ENCODE measurements at regions of chr6 and their contacts with region 1.

Region 1: DNA sequence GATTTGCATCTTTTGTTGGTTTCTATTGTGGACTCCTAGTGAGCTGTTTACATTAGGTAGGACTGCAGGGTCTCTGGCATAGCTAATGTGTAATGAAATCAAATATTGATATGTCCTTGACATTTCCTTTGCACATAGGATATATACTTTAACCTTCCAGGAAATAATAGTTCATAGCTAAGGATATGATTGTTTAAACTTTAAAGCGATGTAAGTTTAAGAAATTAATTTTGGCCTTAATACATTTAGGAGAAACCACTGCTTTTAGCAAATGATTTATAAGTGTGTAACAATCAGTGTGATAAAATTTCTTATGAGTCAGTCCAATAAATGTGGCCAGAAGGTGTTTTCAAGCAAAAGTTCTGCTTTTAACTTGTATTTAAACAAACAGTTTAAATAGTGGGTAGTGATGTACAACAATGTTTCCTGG is 171.8 kb downstream of the HS3ST5 start:
- DNase-seq: no peak
- ATAC-seq: no peak
- H3K4me3 ChIP-seq: no peak overlapping the region
- H3K27ac ChIP-seq: no peak overlapping the region
- H3K4me1 ChIP-seq: no peaks in the 10 kb centered on the region
- H3K27me3 ChIP-seq: peaks cover 3% of the 10 kb centered on the region; the same call in 1 of the 2 replicates
- CTCF ChIP-seq: no peak
- POLR2A ChIP-seq: no peak
- RAD21 ChIP-seq: no peak

Region 2: GRCh38 chr6:114144887-114145851 is 25.8 kb before region 1 on chr6:
- CTCF ChIA-PET with region 1: interaction called, 3 read pairs
- POLR2A ChIA-PET with region 1: no interaction called
- dilution Hi-C with region 1: no loop called
- in situ Hi-C with region 1: no loop called
- intact Hi-C with region 1: loop called (anchors 1 kb)
- DNase-seq: no peak
- ATAC-seq: no peak
- H3K4me3 ChIP-seq: no peak overlapping the region
- H3K27ac ChIP-seq: no peak overlapping the region
- H3K4me1 ChIP-seq: no peaks in the 10 kb centered on the region
- H3K27me3 ChIP-seq: peaks cover 11% of the 10 kb centered on the region
- CTCF ChIP-seq: no peak
- POLR2A ChIP-seq: no peak
- RAD21 ChIP-seq: no peak

Region 3: DNA sequence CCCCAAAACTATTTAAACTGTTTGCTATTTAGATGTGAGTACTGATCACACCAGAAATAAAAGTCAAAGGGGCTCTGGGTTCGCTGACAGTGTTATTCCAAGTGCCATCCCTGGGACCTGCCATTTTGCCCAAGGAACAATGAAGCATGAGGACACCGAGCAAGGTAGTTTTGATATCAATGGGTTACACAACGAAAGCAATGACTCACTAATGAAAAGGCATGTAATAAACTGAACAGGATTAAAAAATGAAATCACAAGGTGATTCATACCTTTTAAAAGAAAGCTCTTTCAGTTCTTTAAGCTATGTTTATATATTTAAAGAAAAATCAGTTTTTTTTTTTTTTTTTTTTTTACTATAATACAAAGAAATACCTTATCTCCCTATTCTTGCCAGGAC is 69.8 kb after region 1 on chr6:
- CTCF ChIA-PET with region 1: no interaction called
- POLR2A ChIA-PET with region 1: no interaction called
- dilution Hi-C with region 1: no loop called
- in situ Hi-C with region 1: no loop called
- intact Hi-C with region 1: no loop called
- DNase-seq: no peak
- ATAC-seq: no peak
- H3K4me3 ChIP-seq: no peak overlapping the region
- H3K27ac ChIP-seq: no peak overlapping the region
- H3K4me1 ChIP-seq: no peaks in the 10 kb centered on the region
- H3K27me3 ChIP-seq: no peaks in the 10 kb centered on the region
- CTCF ChIP-seq: no peak
- POLR2A ChIP-seq: no peak
- RAD21 ChIP-seq: no peak